BJ (cell line): ENCODE measurements at regions of chr3 and their contacts with region 1.

Region 1: DNA sequence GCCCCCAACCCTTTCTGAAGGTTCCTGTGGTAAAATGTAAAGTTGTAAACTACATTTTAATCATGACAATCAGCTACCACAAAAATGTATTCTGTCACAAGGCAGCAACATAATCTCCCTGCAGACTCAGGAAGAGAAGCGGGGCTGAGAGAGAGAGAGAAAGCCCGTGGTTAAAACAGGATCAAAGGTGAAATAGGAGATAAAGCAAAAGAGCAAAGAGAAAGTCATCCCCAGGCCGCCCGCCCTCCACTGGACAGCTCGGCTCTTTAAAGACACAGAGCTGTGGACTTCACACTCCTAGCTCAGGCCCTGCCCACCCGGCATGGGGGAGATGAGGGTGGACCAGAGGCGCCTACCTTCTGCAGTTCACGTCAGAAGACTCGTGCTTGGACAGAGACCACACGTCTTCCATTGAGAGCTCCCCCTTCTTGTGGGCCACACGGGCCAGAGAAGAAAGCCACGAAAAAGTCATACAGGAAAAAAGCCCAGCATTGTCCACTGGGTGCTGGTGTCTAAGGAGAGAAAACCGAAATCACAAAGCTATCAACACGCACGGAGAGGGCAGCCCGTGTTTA is 29.4 kb downstream of the ABCC5 start:
- DNase-seq: peak; percentile 26
- H3K4me3 ChIP-seq: no peak overlapping the region
- H3K27me3 ChIP-seq: no peaks in the 10 kb centered on the region
- CTCF ChIP-seq: no peak

Region 2: GRCh38 chr3:183966251-183966801 is 22.0 kb before region 1 on chr3:
- CTCF ChIA-PET with region 1: no interaction called
- POLR2A ChIA-PET with region 1: no interaction called
- DNase-seq: no peak
- H3K4me3 ChIP-seq: no peak overlapping the region
- H3K27me3 ChIP-seq: no peaks in the 10 kb centered on the region
- CTCF ChIP-seq: no peak

Region 3: GRCh38 chr3:184117636-184118035 is 129.3 kb after region 1 on chr3:
- CTCF ChIA-PET with region 1: no interaction called
- POLR2A ChIA-PET with region 1: interaction called, 11 read pairs
- DNase-seq: no peak
- H3K4me3 ChIP-seq: no peak overlapping the region
- H3K27me3 ChIP-seq: peaks cover 4% of the 10 kb centered on the region
- CTCF ChIP-seq: no peak